GM12878 (cell line): ENCODE measurements at regions of chr10 and their contacts with region 1.

Region 1: DNA sequence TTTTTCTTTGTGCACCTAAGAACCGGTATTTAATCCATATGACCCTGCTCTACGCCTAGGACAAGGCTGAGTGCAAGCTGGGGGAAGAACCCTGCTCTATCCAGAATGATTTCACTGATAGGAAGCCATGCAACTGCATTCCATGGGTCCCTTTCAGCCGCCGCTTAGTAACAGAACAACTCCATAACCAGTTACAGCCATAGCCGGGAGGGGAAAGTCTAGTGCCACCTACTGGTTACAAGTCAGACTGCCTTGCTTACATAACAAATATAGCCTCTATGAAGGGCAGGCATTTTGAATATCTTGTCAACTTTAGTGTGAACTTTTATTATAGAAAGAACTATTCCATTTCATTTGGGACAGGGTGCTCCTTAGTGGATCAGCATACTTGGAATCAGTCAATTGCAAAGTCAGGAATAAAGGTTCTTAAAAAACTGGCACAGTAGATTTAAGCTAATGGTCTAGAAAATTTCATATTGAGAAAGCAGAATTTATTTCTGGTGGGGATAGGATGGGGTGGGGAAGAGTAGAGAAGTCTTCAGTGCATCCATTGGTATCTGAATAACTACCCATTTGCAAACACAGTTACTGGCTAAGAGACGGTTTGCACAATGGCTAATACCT is 521.7 kb downstream of the ADRA2A start:
- DNase-seq: peak; percentile 3
- ATAC-seq: peak; percentile 96
- H3K4me3 ChIP-seq: no peak overlapping the region
- H3K27ac ChIP-seq: no peak overlapping the region
- H3K4me1 ChIP-seq: no peaks in the 10 kb centered on the region; the same call in 1 of the 2 replicates
- H3K27me3 ChIP-seq: no peaks in the 10 kb centered on the region; a peak in 1 of 4 replicates
- CTCF ChIP-seq: peak; percentile 75 to 87 (median 78)
- EP300 ChIP-seq: no peak
- POLR2A ChIP-seq: no peak
- RAD21 ChIP-seq: peak; percentile 59

Region 2: GRCh38 chr10:111076191-111076681 is 522.3 kb before region 1 on chr10:
- CTCF ChIA-PET with region 1: interaction called, 3 read pairs
- POLR2A ChIA-PET with region 1: no interaction called
- RAD21 ChIA-PET with region 1: no interaction called
- SMC1A ChIA-PET with region 1: interaction called, 4 read pairs
- in situ Hi-C with region 1: no loop called
- intact Hi-C with region 1: loop called (anchors 5 kb)
- DNase-seq: no peak
- ATAC-seq: peak; percentile 94
- H3K4me3 ChIP-seq: peak overlapping the region; percentile 45; the same call in 1 of the 2 replicates
- H3K27ac ChIP-seq: no peak overlapping the region
- H3K4me1 ChIP-seq: no peaks in the 10 kb centered on the region
- H3K27me3 ChIP-seq: peaks cover 10 to 23% of the 10 kb centered on the region in 2 experiments
- CTCF ChIP-seq: peak; percentile 71 to 75 (median 72)
- EP300 ChIP-seq: no peak
- POLR2A ChIP-seq: no peak
- RAD21 ChIP-seq: peak; percentile 62

Region 3: DNA sequence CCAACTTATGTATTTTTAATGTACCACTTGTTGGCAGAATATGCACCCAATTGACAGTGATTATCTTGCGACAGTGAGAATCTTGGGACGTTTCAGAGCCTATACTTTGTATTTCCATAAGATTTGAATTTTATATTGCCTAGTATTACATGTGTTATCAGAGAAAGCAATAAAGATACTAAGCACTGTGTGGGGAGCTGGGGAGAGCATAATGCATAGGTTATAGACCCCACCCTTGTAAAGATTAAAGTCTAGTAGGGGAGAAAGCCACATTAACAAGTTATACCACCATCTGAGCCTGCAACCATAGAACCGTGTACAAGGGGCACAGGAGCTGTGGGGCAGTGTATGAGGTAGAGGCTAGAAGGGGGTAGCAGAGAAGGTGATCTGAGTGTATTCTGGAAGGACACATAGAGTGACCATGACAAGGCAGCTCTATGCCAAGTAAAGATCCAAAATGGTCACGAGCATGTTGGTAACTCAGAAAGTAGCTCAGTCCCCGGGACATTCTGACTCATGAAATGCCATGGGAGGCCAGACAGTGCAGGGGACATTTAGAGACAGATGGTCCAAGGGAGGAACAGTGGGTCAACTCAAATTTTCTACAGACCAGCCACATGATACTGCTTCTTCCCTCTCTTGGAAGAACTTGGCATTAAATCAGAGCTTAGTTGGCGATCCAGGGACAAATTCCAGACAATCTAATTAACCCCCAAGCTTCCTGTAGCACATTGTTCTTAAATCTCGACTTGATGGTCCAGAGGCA is 437.3 kb before region 1 on chr10:
- CTCF ChIA-PET with region 1: no interaction called
- POLR2A ChIA-PET with region 1: no interaction called
- RAD21 ChIA-PET with region 1: no interaction called
- SMC1A ChIA-PET with region 1: no interaction called
- in situ Hi-C with region 1: no loop called
- intact Hi-C with region 1: loop called (anchors 10 kb)
- DNase-seq: no peak
- ATAC-seq: no peak
- H3K4me3 ChIP-seq: no peak overlapping the region
- H3K27ac ChIP-seq: no peak overlapping the region
- H3K4me1 ChIP-seq: no peaks in the 10 kb centered on the region
- H3K27me3 ChIP-seq: peaks cover 0 to 2% of the 10 kb centered on the region in 2 experiments; a peak in 1 of 4 replicates
- CTCF ChIP-seq: no peak
- EP300 ChIP-seq: no peak
- POLR2A ChIP-seq: no peak
- RAD21 ChIP-seq: no peak

Region 4: DNA sequence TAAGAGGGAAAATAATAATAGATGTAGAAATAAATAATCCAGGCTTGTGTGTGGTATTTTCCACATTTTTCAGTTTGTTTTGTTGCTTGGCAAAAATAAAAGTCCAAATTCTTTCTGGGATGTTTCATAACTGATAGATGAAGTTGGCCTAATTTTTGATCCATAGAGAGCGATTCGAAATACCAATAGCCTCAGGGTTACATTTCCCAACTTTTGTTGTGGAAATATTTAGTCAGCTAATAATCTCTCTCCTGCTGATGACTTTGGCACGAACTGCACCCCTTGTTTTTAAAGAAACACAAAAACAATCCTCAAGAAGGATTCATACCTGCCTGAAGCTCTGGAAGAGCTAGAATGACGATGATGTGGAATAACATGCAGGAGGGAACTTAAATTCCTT is 38.5 kb before region 1 on chr10:
- CTCF ChIA-PET with region 1: no interaction called
- POLR2A ChIA-PET with region 1: no interaction called
- RAD21 ChIA-PET with region 1: no interaction called
- SMC1A ChIA-PET with region 1: no interaction called
- in situ Hi-C with region 1: no loop called
- intact Hi-C with region 1: no loop called
- DNase-seq: no peak
- ATAC-seq: no peak
- H3K4me3 ChIP-seq: no peak overlapping the region
- H3K27ac ChIP-seq: no peak overlapping the region
- H3K4me1 ChIP-seq: no peaks in the 10 kb centered on the region
- H3K27me3 ChIP-seq: no peaks in the 10 kb centered on the region
- CTCF ChIP-seq: no peak
- EP300 ChIP-seq: no peak
- POLR2A ChIP-seq: no peak
- RAD21 ChIP-seq: no peak

Region 5: DNA sequence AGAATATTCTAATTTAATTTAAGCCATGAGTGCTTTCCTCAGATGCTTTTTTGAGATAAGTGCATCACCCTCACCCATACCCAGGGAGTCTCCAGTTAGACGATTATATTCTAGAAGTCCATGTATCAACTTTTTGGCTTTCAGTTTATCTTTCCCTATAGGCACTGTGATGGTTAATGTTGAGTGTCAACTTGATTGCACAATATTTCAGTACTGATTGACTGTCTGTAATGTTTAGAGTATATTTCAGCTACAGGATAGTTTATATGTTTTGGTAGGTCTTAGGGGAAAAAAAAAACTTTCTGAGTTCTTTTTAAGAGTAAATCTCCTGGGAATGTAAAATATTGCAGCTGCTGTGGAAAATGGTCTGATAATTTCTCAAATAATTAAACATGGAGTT is 13.7 kb after region 1 on chr10:
- CTCF ChIA-PET with region 1: interaction called, 18 read pairs
- POLR2A ChIA-PET with region 1: no interaction called
- RAD21 ChIA-PET with region 1: no interaction called
- SMC1A ChIA-PET with region 1: interaction called, 6 read pairs
- in situ Hi-C with region 1: no loop called
- intact Hi-C with region 1: no loop called
- DNase-seq: no peak
- ATAC-seq: no peak
- H3K4me3 ChIP-seq: no peak overlapping the region
- H3K27ac ChIP-seq: no peak overlapping the region
- H3K4me1 ChIP-seq: no peaks in the 10 kb centered on the region
- H3K27me3 ChIP-seq: no peaks in the 10 kb centered on the region
- CTCF ChIP-seq: no peak
- EP300 ChIP-seq: no peak
- POLR2A ChIP-seq: no peak
- RAD21 ChIP-seq: no peak